Stomach (tissue), 19 donors: ENCODE measurements at regions of chr2 and their contacts with region 1.

Region 1: GRCh38 chr2:131673392-131674173 is 145.9 kb downstream of the CCDC74A start:
- DNase-seq: peak; percentile 81 to 86
- H3K4me3 ChIP-seq: peak overlapping the region; percentile 34 to 49 (median 38)
- H3K27ac ChIP-seq: no peak overlapping the region
- H3K4me1 ChIP-seq: peaks cover 21 to 25% (median 23%) of the 10 kb centered on the region in 4 donors
- H3K27me3 ChIP-seq: peaks cover 0 to 47% (median 16%) of the 10 kb centered on the region in 3 donors
- CTCF ChIP-seq: peak in 5 of 7 experiments; percentile 70 to 92 (median 88)
- EP300 ChIP-seq: no peak
- POLR2A ChIP-seq: no peak

Region 2: DNA sequence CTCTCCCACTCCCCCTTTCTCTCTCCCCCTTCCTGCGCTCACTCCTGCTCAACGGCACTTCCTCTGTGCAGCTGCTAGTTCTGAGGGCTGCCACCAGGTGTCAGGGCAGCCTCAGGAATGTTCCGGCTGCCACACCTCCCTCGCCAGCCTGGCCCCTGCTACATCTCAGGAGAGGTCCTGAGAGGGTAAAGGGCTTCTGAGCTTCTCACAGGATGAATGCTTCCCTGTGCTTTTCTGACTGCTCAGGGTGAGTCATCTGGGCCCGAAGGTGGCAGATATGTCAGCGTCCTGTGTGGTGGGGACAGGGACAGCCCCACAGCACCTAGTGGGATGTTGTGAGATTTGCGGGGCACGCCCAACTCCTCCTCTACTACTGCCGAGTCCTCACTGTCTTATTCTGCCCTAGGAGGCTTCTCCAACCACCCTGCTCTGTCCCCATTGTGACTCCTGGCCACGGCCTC is 519.5 kb before region 1 on chr2:
- intact Hi-C with region 1: loop called (anchors 10 kb)
- DNase-seq: peak; percentile 63 to 88
- H3K4me3 ChIP-seq: no peak overlapping the region
- H3K27ac ChIP-seq: no peak overlapping the region
- H3K4me1 ChIP-seq: peaks cover 0 to 10% (median 2%) of the 10 kb centered on the region in 4 donors
- H3K27me3 ChIP-seq: no peaks in the 10 kb centered on the region
- CTCF ChIP-seq: peak in 5 of 7 experiments; percentile 66 to 89 (median 77)
- EP300 ChIP-seq: no peak
- POLR2A ChIP-seq: no peak

Region 3: GRCh38 chr2:131801210-131801744 is 127.7 kb after region 1 on chr2:
- intact Hi-C with region 1: loop called (anchors 10 kb)
- DNase-seq: peak in 1 of 2 donors; percentile 20
- H3K4me3 ChIP-seq: peak overlapping the region; percentile 38 to 53 (median 44)
- H3K27ac ChIP-seq: no peak overlapping the region
- H3K4me1 ChIP-seq: peaks cover 5 to 17% (median 15%) of the 10 kb centered on the region in 4 donors
- H3K27me3 ChIP-seq: peaks cover 0 to 23% (median 0%) of the 10 kb centered on the region in 3 donors
- CTCF ChIP-seq: no peak
- EP300 ChIP-seq: no peak
- POLR2A ChIP-seq: no peak